Endothelial cell of umbilical vein (primary cell): ENCODE measurements at regions of chr3 and their contacts with region 1.

Region 1: GRCh38 chr3:120095226-120095978 is 1.2 kb upstream of the GSK3B start:
- DNase-seq: peak; percentile 92
- H3K4me3 ChIP-seq: peak overlapping the region; percentile 35 to 96 (median 78)
- H3K27ac ChIP-seq: peak overlapping the region; percentile 99
- H3K4me1 ChIP-seq: peaks cover 22% of the 10 kb centered on the region
- H3K27me3 ChIP-seq: no peaks in the 10 kb centered on the region
- CTCF ChIP-seq: no peak
- POLR2A ChIP-seq: peak; percentile 97

Region 2: DNA sequence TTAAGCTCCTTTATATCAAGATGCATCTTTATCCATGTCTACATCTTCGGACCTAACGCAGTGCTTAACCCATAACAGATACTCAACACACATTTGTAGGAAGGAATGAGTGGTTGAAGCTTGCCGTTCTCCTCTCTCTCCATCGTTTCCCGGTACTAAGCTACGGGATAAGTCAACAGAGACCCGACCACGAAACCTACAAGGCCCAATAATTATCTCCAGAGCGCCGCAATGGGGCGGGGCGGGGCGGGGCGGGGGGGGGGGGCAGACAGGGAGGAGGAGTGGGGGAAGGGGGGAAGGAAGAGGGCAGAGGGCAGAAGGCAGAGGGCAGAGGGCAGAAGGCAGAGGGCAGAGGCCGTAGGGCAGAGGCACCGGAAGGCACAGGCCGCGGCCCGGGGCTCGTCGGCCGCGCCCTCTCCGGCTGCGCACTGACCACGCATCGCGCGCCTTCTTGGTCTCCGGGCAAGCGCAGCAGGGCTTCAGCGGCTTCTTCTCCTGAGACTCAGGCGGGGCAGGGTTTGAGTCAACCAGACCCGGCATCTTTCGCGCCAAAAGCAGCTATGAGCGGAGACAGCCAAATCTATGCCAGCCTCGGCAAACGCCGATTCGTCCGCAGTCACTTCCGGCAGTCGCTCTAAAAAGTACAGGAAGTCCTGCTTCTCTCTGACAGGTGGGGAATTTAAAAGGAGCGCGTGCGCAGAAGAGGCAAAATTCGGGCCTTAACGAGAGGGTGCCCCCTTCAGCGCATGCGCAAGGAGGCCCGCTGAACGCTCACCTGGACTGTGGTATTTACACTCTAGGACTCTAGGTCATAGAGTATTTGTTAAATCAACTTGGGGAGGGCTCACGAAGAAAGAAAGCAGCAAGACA is 418.4 kb before region 1 on chr3 and contains the start of gene COX17:
- CTCF ChIA-PET with region 1: no interaction called
- POLR2A ChIA-PET with region 1: no interaction called
- dilution Hi-C with region 1: no loop called
- intact Hi-C with region 1: loop called (anchors 1 kb)
- DNase-seq: peak; percentile 93
- H3K4me3 ChIP-seq: peak within 1 kb of the TSS; percentile 71 to 88 (median 75)
- H3K27ac ChIP-seq: peak within 1 kb of the TSS; percentile 62
- H3K4me1 ChIP-seq: peaks cover 15% of the 10 kb centered on the region
- H3K27me3 ChIP-seq: no peaks in the 10 kb centered on the region
- CTCF ChIP-seq: no peak
- POLR2A ChIP-seq: peak; percentile 21
- total RNA-seq, gene COX17: 31.3 and 37.6 TPM in 2 replicates

Region 3: GRCh38 chr3:119819806-119820205 is 275.6 kb before region 1 on chr3:
- CTCF ChIA-PET with region 1: no interaction called
- POLR2A ChIA-PET with region 1: no interaction called
- dilution Hi-C with region 1: no loop called
- intact Hi-C with region 1: loop called (anchors 5 kb)
- DNase-seq: no peak
- H3K4me3 ChIP-seq: no peak overlapping the region
- H3K27ac ChIP-seq: no peak overlapping the region
- H3K4me1 ChIP-seq: no peaks in the 10 kb centered on the region
- H3K27me3 ChIP-seq: no peaks in the 10 kb centered on the region
- CTCF ChIP-seq: no peak
- POLR2A ChIP-seq: no peak

Region 4: DNA sequence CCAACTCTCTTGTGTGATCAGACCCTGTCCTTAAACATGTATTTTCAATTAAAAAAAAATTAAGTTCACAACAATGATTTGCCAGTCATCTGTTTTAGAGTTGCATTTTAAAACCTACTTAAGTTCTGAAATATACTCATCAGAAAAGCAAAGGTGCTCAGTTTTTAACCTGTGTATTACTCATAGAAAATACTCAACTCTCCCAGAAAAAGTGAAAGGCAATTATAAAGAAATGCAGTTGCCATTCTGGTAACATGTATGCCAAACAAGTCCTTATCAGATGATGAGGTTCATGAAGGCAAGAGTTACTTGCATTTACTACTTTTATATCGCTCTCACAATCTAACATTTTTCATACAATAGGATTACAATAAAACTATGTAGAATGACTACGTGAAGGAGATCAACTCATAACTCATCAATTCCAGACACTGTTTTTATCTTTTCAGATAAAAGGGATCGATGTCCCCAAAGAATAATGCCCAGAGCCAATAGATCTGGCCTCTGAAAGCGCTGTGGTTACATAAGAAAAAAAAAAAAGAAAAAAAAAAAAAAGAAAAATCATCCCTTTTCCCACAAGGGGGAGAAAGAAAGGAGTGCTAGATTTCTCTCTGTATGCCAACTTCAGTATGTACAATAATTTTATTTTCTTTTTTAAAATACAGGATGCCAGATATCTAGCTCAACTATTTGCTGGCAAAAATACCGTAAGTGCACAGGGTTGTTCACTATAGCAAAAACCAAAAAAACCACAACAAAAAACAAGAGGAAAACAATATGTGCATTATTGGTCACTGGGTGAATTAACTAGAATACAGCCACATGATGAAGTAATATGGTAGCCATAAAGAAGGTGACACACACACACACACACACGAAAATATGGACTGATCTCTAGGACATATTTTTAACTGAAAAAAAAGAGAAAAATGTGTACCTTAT is 176.1 kb before region 1 on chr3:
- CTCF ChIA-PET with region 1: interaction called, 4 read pairs
- POLR2A ChIA-PET with region 1: no interaction called
- dilution Hi-C with region 1: no loop called
- intact Hi-C with region 1: loop called (anchors 5 kb)
- DNase-seq: no peak
- H3K4me3 ChIP-seq: no peak overlapping the region
- H3K27ac ChIP-seq: no peak overlapping the region
- H3K4me1 ChIP-seq: no peaks in the 10 kb centered on the region
- H3K27me3 ChIP-seq: no peaks in the 10 kb centered on the region
- CTCF ChIP-seq: no peak
- POLR2A ChIP-seq: no peak

Region 5: GRCh38 chr3:120177151-120177550 is 81.7 kb after region 1 on chr3:
- CTCF ChIA-PET with region 1: interaction called, 8 read pairs
- POLR2A ChIA-PET with region 1: interaction called, 37 read pairs
- dilution Hi-C with region 1: no loop called
- intact Hi-C with region 1: loop called (anchors 1 kb)
- DNase-seq: peak; percentile 68
- H3K4me3 ChIP-seq: no peak overlapping the region
- H3K27ac ChIP-seq: peak overlapping the region; percentile 72
- H3K4me1 ChIP-seq: peaks cover 23% of the 10 kb centered on the region
- H3K27me3 ChIP-seq: no peaks in the 10 kb centered on the region
- CTCF ChIP-seq: no peak
- POLR2A ChIP-seq: no peak

Region 6: DNA sequence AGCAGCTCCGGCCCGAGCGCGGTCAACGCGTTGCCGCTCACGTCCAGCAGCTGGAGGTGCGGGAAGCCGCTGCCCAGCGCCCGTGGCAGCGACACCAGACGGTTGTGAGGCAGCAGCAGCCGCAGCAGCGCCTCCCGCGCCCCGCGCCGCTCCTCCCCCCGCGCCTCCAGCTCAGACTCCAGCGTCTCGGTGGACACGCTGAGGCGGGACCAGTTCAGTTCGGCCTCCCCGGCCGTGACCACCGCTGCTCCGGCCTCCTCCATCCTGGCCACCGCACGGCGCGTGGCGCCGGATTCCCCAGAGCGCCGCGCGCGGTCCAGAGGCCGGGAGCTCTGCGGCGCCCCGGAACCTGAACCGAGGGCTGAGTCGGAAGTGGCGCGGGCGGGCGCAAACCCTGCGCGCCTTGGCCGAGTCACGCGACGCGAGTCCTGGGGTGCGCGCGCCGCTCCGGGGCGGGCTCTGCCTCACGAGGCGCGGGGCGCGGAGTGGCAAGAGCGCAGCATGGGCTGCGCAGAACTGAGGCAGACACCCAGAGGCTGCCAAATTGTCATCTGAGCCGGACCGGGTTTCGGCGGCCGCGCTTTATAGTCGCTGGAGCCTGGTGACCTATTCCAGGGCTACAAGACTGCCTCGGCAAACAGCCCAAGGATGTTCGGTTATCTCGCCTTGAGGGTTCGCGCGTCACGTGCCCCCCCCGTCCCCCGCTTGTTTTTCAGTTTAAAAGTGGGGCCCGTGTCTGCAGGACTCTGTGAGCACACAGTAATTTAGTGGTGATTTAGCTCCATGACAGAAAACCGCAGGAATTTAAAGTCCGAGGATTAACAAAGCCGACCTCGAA is 253.8 kb after region 1 on chr3 and contains the start of gene LRRC58:
- CTCF ChIA-PET with region 1: no interaction called
- POLR2A ChIA-PET with region 1: interaction called, 4 read pairs
- dilution Hi-C with region 1: no loop called
- intact Hi-C with region 1: loop called (anchors 2 kb)
- DNase-seq: peak; percentile 88
- H3K4me3 ChIP-seq: peak within 1 kb of the TSS; percentile 34 to 76 (median 59)
- H3K27ac ChIP-seq: peak within 1 kb of the TSS; percentile 67
- H3K4me1 ChIP-seq: peaks cover 14% of the 10 kb centered on the region
- H3K27me3 ChIP-seq: peaks cover 5% of the 10 kb centered on the region in 2 experiments
- CTCF ChIP-seq: peak; percentile 5 to 49
- POLR2A ChIP-seq: peak; percentile 81
- total RNA-seq, gene LRRC58: 11.9 and 12.3 TPM in 2 replicates

Region 7: DNA sequence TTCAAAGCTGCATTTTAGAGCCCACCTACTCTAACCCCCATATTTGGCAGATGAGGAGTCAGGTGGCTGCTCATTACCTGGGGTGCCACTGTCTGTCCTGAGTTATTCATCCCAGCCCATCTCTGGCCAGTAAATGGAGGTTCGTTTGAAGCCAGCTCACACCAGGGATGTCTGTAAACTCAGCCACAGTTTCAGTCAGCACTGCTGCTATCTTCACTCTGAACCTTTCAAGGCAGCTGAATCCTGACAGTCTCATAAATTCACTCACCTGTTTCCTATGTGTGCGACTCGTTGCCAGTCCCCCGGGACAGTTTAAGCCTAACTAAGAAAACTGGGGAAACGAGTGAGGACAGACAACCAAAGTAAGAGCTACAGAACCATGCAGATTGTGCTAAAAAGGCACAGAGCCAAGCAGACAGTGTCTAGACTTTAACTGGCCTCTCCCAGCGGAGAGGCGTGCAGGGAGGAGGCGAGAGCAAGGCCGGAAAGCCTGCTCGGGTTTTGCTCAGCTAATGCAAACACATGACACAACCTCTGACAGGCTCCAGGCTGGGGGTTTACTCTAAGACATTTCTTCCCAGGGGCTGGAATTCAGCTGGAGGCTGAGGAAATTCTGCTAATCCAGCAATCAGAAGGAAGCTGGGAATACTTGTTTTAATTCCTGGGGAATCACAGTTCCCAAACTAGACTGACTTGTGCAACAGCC is 343.4 kb after region 1 on chr3:
- CTCF ChIA-PET with region 1: no interaction called
- POLR2A ChIA-PET with region 1: no interaction called
- dilution Hi-C with region 1: no loop called
- intact Hi-C with region 1: loop called (anchors 5 kb)
- DNase-seq: peak; percentile 95
- H3K4me3 ChIP-seq: no peak overlapping the region
- H3K27ac ChIP-seq: peak overlapping the region; percentile 91
- H3K4me1 ChIP-seq: peaks cover 66% of the 10 kb centered on the region
- H3K27me3 ChIP-seq: no peaks in the 10 kb centered on the region
- CTCF ChIP-seq: no peak
- POLR2A ChIP-seq: no peak